CD14-positive monocyte (primary cell): ENCODE measurements at regions of chr7 and their contacts with region 1.

Region 1: DNA sequence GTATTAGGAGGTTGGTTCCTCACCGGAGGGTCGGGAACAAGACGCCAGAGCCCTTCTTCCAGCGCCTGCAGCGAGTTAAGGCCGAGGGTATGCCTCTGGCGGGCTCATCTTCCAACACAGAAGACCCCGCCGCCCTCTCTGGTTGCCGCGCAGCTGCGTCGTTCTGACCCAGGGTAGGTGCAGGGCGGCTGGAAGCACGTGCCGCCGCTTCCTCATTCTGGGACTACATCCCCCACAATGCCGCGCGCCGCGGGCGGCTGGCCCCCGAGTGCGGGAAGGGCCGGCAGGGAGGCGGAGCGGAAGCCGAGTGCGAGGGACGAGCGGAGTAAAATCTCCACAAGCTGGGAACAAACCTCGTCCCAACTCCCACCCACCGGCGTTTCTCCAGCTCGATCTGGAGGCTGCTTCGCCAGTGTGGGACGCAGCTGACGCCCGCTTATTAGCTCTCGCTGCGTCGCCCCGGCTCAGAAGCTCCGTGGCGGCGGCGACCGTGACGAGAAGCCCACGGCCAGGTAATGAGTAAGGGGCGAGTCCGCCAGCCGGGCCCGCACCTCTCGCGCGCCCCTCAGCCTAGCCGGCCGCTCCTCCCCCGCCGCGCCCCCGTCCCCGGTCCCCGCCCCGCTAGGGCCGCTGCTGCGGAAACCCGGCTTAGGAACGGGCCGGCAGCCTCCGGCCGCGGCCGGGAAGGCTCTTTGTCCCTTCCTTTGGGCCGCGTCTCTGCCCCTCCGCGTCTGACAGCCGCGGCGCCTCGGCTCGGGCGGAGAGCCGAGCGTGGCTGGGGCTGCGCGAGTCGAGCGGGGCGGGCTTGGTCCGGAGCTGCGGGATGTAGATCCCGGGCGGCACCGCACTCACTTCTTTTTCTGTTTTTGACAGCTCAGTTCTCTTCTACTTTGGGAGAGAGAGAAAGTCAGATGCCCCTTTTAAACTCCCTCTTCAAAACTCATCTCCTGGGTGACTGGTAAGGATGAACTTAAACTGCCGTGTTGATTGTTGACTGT is at the start of gene CCDC126:
- DNase-seq: peak; percentile 82 to 84 (median 83)
- H3K4me3 ChIP-seq: peak within 1 kb of the TSS; percentile 77 to 87 (median 85)
- H3K4me3 Mint-ChIP-seq: peak within 1 kb of the TSS; percentile 83 to 92
- H3K27ac ChIP-seq: peak within 1 kb of the TSS; percentile 72 to 91
- H3K27ac Mint-ChIP-seq: peak within 1 kb of the TSS; percentile 65 to 89 (median 84)
- H3K4me1 ChIP-seq: peaks cover 14 to 15% of the 10 kb centered on the region in 2 donors
- H3K4me1 Mint-ChIP-seq: peaks cover 23% of the 10 kb centered on the region
- H3K27me3 ChIP-seq: no peaks in the 10 kb centered on the region
- H3K27me3 Mint-ChIP-seq: peaks cover 9 to 23% (median 10%) of the 10 kb centered on the region in 3 donors
- CTCF ChIP-seq: no peak
- polyA plus RNA-seq, gene CCDC126: 3.5 to 20.1 (median 17.4) TPM

Region 2: DNA sequence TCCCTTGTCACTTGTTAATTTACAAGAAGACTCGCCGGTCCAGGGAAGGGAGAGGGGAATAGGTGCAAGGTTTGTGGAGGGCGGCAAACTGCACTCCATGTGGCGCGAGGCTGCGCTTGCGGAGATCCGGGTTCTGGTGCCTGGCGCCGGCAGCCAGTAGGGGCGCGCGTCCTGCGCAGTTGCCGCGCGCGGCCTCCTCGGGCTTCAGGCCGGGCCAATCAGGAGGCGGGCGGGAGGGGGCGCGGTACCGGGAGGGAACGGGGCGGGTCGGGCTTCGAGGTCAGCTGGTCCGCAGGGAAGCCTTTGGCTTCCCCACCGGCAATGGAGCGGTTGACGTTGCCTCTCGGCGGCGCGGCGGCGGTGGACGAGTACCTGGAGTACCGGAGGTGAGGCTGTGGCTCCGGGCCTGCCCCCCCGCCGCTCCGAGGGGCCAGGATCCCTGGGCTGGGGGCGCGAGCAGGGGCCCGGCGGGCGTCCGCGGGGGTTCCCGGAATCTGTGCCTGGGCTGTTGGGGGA is 82.6 kb after region 1 on chr7 and contains the start of gene FAM221A:
- intact Hi-C with region 1: loop called (anchors 5 to 10 kb)
- DNase-seq: peak; percentile 68 to 80 (median 75)
- H3K4me3 ChIP-seq: peak within 1 kb of the TSS; percentile 52 to 81 (median 67)
- H3K4me3 Mint-ChIP-seq: peak within 1 kb of the TSS; percentile 90 to 97
- H3K27ac ChIP-seq: no peak within 1 kb of the TSS
- H3K27ac Mint-ChIP-seq: peak within 1 kb of the TSS in 5 of 7 donors; percentile 38 to 81 (median 55)
- H3K4me1 ChIP-seq: peaks cover 11 to 17% of the 10 kb centered on the region in 2 donors
- H3K4me1 Mint-ChIP-seq: peaks cover 12% of the 10 kb centered on the region
- H3K27me3 ChIP-seq: no peaks in the 10 kb centered on the region
- H3K27me3 Mint-ChIP-seq: peaks cover 3 to 11% (median 5%) of the 10 kb centered on the region in 3 donors
- CTCF ChIP-seq: peak; percentile 73
- polyA plus RNA-seq, gene FAM221A: 1.4 to 7.8 (median 2.1) TPM

Region 3: GRCh38 chr7:24304494-24305095 is 707.2 kb after region 1 on chr7:
- intact Hi-C with region 1: no loop called
- DNase-seq: no peak
- H3K4me3 ChIP-seq: no peak overlapping the region
- H3K4me3 Mint-ChIP-seq: no peak overlapping the region
- H3K27ac ChIP-seq: no peak overlapping the region
- H3K27ac Mint-ChIP-seq: no peak overlapping the region
- H3K4me1 ChIP-seq: no peaks in the 10 kb centered on the region
- H3K4me1 Mint-ChIP-seq: no peaks in the 10 kb centered on the region
- H3K27me3 ChIP-seq: no peaks in the 10 kb centered on the region
- H3K27me3 Mint-ChIP-seq: peaks cover 0 to 3% (median 0%) of the 10 kb centered on the region in 3 donors
- CTCF ChIP-seq: no peak